Vagina (tissue), 2 donors: ENCODE measurements at regions of chr1 and their contacts with region 1.

Region 1: DNA sequence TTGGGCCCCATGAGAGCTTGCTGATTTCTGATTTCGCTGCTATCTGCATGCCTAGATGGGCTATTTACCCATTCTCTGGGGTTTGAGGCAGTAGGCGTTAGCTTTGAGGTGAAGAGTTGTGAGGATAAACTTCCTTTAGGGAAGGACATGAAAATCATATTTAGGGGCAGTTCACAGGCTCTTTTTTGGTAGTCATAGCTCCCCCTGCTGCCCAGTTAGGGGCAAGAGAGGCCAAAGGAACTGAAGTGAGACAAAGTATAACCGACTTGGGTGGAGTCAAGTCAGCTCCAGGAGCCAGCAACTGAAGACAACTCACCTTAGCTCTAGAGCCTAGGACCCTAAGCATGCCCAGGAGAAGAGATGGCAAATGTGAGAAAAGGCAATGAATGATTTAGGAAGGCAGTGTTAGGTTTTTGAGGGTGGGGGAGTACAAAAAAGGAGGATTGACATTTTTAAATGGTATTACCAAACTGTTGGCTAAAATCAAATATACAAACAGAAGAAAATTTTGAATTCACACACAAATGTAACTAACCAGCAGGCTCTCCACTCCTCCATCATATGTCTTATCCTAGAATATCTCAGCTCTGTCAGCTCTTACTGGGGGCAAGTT is 625.2 kb downstream of the LMO4 start:
- DNase-seq: no peak
- H3K4me3 ChIP-seq: no peak overlapping the region
- H3K27ac ChIP-seq: no peak overlapping the region
- H3K4me1 ChIP-seq: no peaks in the 10 kb centered on the region
- H3K27me3 ChIP-seq: no peaks in the 10 kb centered on the region
- CTCF ChIP-seq: peak in 2 of 3 experiments; percentile 45 to 67
- POLR2A ChIP-seq: no peak

Region 2: GRCh38 chr1:87292684-87293493 is 660.9 kb before region 1 on chr1:
- intact Hi-C with region 1: loop called (anchors 5 kb)
- DNase-seq: no peak
- H3K4me3 ChIP-seq: no peak overlapping the region
- H3K27ac ChIP-seq: no peak overlapping the region
- H3K4me1 ChIP-seq: no peaks in the 10 kb centered on the region
- H3K27me3 ChIP-seq: no peaks in the 10 kb centered on the region
- CTCF ChIP-seq: peak; percentile 48 to 89 (median 73)
- POLR2A ChIP-seq: no peak

Region 3: GRCh38 chr1:87820668-87821334 is 133.0 kb before region 1 on chr1:
- intact Hi-C with region 1: no loop called
- DNase-seq: no peak
- H3K4me3 ChIP-seq: no peak overlapping the region
- H3K27ac ChIP-seq: no peak overlapping the region
- H3K4me1 ChIP-seq: no peaks in the 10 kb centered on the region
- H3K27me3 ChIP-seq: no peaks in the 10 kb centered on the region
- CTCF ChIP-seq: no peak
- POLR2A ChIP-seq: no peak

Region 4: DNA sequence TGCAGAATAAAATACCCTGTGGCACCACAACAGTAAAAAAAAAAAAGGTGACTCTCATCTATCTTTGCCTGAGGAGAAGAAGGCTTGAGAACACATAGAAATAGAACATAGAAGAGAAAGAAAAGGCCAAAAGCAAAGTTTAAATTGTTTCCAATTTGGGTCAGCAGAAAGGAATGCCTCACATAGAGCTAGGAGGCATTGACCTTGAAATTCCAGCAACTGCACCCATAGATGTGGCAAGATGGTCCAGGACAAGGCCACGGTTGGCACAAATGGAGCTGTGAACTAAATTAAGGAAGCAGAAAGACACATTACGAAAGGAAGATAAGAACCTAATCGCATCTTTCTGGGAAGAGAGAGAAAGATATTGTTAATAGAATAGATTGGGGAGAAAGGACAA is 36.9 kb before region 1 on chr1:
- intact Hi-C with region 1: no loop called
- DNase-seq: no peak
- H3K4me3 ChIP-seq: no peak overlapping the region
- H3K27ac ChIP-seq: no peak overlapping the region
- H3K4me1 ChIP-seq: no peaks in the 10 kb centered on the region
- H3K27me3 ChIP-seq: no peaks in the 10 kb centered on the region
- CTCF ChIP-seq: no peak
- POLR2A ChIP-seq: no peak